CD4-positive, alpha-beta memory T cell (primary cell): ENCODE measurements at regions of chr3 and their contacts with region 1.

Region 1: GRCh38 chr3:195442573-195443390 is at the start of gene ACAP2:
- DNase-seq: peak; percentile 97 to 99 (median 98)
- H3K4me3 ChIP-seq: peak within 1 kb of the TSS; percentile 82 to 87
- H3K4me3 Mint-ChIP-seq: peak within 1 kb of the TSS; percentile 93 to 97 (median 94)
- H3K27ac ChIP-seq: peak within 1 kb of the TSS; percentile 89
- H3K27ac Mint-ChIP-seq: peak within 1 kb of the TSS; percentile 91 to 96 (median 94)
- H3K4me1 ChIP-seq: peaks cover 54% of the 10 kb centered on the region
- H3K4me1 Mint-ChIP-seq: peaks cover 32 to 60% (median 43%) of the 10 kb centered on the region in 4 donors
- H3K27me3 ChIP-seq: no peaks in the 10 kb centered on the region
- H3K27me3 Mint-ChIP-seq: no peaks in the 10 kb centered on the region
- total RNA-seq, gene ACAP2: 72.3 to 73.5 TPM

Region 2: DNA sequence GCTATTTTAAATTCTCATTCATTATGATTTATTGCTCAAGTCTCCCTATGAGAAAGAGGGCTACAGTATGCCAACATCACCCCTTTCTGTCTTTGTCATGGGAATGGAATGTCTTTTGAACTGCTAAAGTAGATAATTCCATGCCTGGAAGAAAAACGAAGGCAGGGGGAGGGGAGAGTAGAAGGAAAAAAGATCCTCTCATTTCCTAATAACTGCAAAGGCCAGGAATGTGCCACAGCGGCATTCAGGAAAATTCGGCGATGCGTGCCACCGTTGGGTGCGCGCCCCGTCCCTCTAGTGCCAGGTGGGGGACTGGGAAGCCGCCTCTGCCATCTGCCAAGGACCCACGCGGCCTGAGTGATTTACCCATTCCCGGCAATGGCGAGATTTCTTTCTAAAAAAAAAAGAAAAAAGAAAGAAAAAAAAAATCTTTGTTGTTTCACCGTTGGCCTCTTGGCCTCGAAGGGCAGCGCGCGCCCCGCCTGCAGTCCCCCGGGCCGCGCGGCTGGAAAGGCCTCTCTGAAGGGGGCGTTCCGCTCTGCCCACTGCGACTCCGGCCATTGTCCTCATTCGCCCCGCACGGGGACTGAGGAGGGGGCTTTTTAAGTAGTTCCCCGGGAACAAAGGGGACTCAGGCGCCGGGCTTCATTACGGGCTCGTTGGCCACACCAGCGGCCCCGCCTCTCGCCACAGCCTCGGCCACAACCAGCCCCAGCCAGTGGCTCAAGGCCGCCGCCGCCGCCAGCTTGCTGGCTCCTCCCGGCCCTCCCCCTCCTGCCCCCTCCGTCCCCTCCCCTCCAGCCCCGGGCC is 1146.1 kb before region 1 on chr3:
- CTCF ChIA-PET with region 1: no interaction called
- POLR2A ChIA-PET with region 1: no interaction called
- intact Hi-C with region 1: no loop called
- DNase-seq: no peak
- H3K4me3 ChIP-seq: no peak overlapping the region
- H3K4me3 Mint-ChIP-seq: no peak overlapping the region
- H3K27ac ChIP-seq: no peak overlapping the region
- H3K27ac Mint-ChIP-seq: no peak overlapping the region
- H3K4me1 ChIP-seq: peaks cover 11% of the 10 kb centered on the region
- H3K4me1 Mint-ChIP-seq: peaks cover 4 to 10% (median 7%) of the 10 kb centered on the region in 4 donors
- H3K27me3 ChIP-seq: no peaks in the 10 kb centered on the region
- H3K27me3 Mint-ChIP-seq: peaks cover 0 to 10% of the 10 kb centered on the region in 2 donors

Region 3: GRCh38 chr3:194769020-194769643 is 673.6 kb before region 1 on chr3:
- CTCF ChIA-PET with region 1: no interaction called
- POLR2A ChIA-PET with region 1: no interaction called
- intact Hi-C with region 1: loop called (anchors 1 kb)
- DNase-seq: peak; percentile 91 to 98 (median 94)
- H3K4me3 ChIP-seq: peak overlapping the region; percentile 33 to 54
- H3K4me3 Mint-ChIP-seq: peak overlapping the region; percentile 86 to 96 (median 87)
- H3K27ac ChIP-seq: peak overlapping the region; percentile 73
- H3K27ac Mint-ChIP-seq: peak overlapping the region; percentile 82 to 98 (median 95)
- H3K4me1 ChIP-seq: peaks cover 15% of the 10 kb centered on the region
- H3K4me1 Mint-ChIP-seq: peaks cover 5 to 30% (median 17%) of the 10 kb centered on the region in 4 donors
- H3K27me3 ChIP-seq: no peaks in the 10 kb centered on the region
- H3K27me3 Mint-ChIP-seq: peaks cover 8 to 11% of the 10 kb centered on the region in 2 donors

Region 4: DNA sequence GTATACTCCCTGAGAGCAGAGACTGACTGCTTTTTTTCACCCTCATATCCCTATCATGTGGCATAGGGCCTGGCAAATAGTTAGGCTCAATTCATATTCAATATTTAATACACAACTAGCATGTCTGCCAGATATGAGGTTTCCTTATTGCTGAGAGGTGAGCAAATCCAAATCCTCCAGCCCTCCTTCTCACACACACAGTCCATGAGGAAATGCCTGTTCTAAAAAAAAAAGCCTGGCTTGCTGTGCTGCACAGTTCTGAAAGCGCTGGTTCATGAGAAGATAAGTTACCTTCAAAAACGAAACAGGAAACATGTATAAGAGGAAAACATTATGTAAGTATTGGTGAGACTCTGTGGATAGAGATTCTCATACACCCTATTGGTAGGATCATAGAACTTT is 15.5 kb after region 1 on chr3:
- CTCF ChIA-PET with region 1: interaction called, 3 read pairs
- POLR2A ChIA-PET with region 1: interaction called, 10 read pairs
- intact Hi-C with region 1: loop called (anchors 1 kb)
- DNase-seq: peak in 4 of 5 donors; percentile 43 to 59 (median 50)
- H3K4me3 ChIP-seq: no peak overlapping the region
- H3K4me3 Mint-ChIP-seq: peak overlapping the region; percentile 20 to 78 (median 76)
- H3K27ac ChIP-seq: no peak overlapping the region
- H3K27ac Mint-ChIP-seq: peak overlapping the region; percentile 45 to 92 (median 91)
- H3K4me1 ChIP-seq: peaks cover 13% of the 10 kb centered on the region
- H3K4me1 Mint-ChIP-seq: peaks cover 7 to 25% (median 15%) of the 10 kb centered on the region in 4 donors
- H3K27me3 ChIP-seq: no peaks in the 10 kb centered on the region
- H3K27me3 Mint-ChIP-seq: peaks cover 0 to 3% of the 10 kb centered on the region in 2 donors